Activated T-helper 2 cell treated with anti-CD3 and anti-CD28 coated beads, Interferon-gamma antibody, Interleukin-2, Interleukin-4, amounts not matched to agents 10 μg/mL and 5 μg/mL and 100 μg/mL, durations not matched to agents 14 hours and 24 hours and 36 hours (primary cell): ENCODE measurements at regions of chr19 and their contacts with region 1.

Region 1: GRCh38 chr19:18086590-18087138 is at the start of gene IL12RB1:
- DNase-seq: peak; percentile 76
- H3K4me3 Mint-ChIP-seq: peak within 1 kb of the TSS; percentile 97
- H3K27ac Mint-ChIP-seq: peak within 1 kb of the TSS; percentile 97
- H3K4me1 Mint-ChIP-seq: peaks cover 63% of the 10 kb centered on the region
- H3K27me3 Mint-ChIP-seq: no peaks in the 10 kb centered on the region
- total RNA-seq, gene IL12RB1: 41.4 and 43.3 TPM in 2 replicates

Region 2: DNA sequence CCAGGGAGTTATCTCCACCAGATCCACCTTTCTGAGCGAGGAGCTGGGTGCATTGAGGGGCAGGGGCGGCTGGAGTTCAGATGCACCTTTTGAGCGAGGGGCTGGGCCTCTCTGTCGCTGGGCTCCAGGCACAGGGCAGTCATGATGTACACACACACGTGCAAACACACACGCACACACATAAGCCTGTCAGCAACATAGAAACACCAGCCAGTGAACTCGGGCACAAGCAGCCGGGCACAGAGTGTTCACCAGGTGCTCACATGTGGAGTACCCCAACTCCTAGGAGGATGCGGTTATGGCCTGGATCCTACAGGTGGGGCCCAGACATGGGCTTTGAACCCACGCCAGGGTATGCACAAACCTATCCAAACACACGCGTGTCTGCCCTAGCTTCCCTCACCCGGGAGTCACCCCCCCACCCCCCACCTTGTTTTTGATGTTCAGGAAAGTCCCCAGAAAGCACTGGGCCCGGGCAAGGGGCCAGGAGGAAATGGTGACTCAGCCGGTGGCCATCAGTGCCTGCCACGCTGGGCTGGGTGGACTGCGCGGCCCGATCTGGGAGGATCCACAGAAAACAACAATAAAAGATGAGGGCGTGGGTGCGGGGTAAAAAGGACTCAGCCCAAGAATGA is 65.4 kb before region 1 on chr19:
- intact Hi-C with region 1: no loop called
- DNase-seq: no peak
- H3K4me3 Mint-ChIP-seq: peak overlapping the region; percentile 73
- H3K27ac Mint-ChIP-seq: peak overlapping the region; percentile 92
- H3K4me1 Mint-ChIP-seq: peaks cover 47% of the 10 kb centered on the region
- H3K27me3 Mint-ChIP-seq: no peaks in the 10 kb centered on the region

Region 3: GRCh38 chr19:18044825-18045304 is 41.8 kb before region 1 on chr19:
- intact Hi-C with region 1: loop called (anchors 2 kb)
- DNase-seq: peak; percentile 86
- H3K4me3 Mint-ChIP-seq: peak overlapping the region; percentile 61
- H3K27ac Mint-ChIP-seq: peak overlapping the region; percentile 86
- H3K4me1 Mint-ChIP-seq: peaks cover 32% of the 10 kb centered on the region
- H3K27me3 Mint-ChIP-seq: peaks cover 2% of the 10 kb centered on the region